Activated CD4-positive, alpha-beta T cell treated with anti-CD3 and anti-CD28 coated beads for 36 hours (primary cell): ENCODE measurements at regions of chr13 and their contacts with region 1.

Region 1: GRCh38 chr13:19587635-19588300 is 26.4 kb upstream of the TPTE2 start:
- DNase-seq: peak; percentile 46
- ATAC-seq: peak; percentile 67
- H3K4me3 Mint-ChIP-seq: peak overlapping the region; percentile 78
- H3K27ac Mint-ChIP-seq: peak overlapping the region; percentile 93
- H3K4me1 Mint-ChIP-seq: peaks cover 14% of the 10 kb centered on the region
- H3K27me3 Mint-ChIP-seq: no peaks in the 10 kb centered on the region

Region 2: DNA sequence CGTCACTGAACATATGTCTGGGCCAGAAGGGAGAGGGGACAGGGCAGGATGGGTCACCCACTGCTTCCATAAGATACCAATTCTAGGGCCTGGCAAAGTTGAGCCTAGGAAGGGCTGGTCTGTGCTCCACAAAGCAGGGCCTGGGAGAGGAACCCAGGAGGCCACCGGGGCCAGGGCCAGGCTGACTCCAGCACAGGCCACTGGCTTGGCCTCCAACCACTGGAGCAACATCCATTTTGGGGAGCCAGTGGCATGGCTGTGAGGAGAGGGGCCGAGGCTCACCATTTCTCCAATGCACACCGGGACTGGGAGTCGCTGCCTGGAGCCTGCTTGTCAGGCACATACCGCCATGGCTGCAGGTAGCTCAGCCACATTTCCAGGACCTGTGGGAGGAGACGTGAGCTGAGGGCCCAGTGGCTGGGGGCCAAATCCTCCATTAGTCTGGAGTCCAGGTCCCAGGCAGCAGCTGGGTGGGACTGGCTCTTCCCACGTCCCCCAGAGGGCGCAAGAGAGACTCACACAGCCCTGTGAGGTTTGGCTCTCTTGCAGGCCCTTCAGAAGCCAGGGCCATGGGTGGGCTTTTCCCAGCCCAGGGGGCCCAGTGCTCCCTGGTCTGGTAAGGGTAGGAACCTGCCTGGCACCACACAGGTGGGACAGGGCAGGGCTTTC is 433.9 kb before region 1 on chr13:
- CTCF ChIA-PET with region 1: no interaction called
- POLR2A ChIA-PET with region 1: no interaction called
- intact Hi-C with region 1: loop called in 1 of 2 experiments (anchors 10 kb)
- DNase-seq: peak; percentile 58
- ATAC-seq: peak; percentile 57
- H3K4me3 Mint-ChIP-seq: no peak overlapping the region
- H3K27ac Mint-ChIP-seq: no peak overlapping the region
- H3K4me1 Mint-ChIP-seq: no peaks in the 10 kb centered on the region
- H3K27me3 Mint-ChIP-seq: peaks cover 2% of the 10 kb centered on the region

Region 3: GRCh38 chr13:19567820-19568534 is 19.8 kb before region 1 on chr13:
- CTCF ChIA-PET with region 1: interaction called, 7 read pairs
- POLR2A ChIA-PET with region 1: no interaction called
- intact Hi-C with region 1: loop called in 1 of 2 experiments (anchors 2 kb)
- DNase-seq: no peak
- ATAC-seq: no peak
- H3K4me3 Mint-ChIP-seq: no peak overlapping the region
- H3K27ac Mint-ChIP-seq: no peak overlapping the region
- H3K4me1 Mint-ChIP-seq: peaks cover 3% of the 10 kb centered on the region
- H3K27me3 Mint-ChIP-seq: peaks cover 2% of the 10 kb centered on the region

Region 4: GRCh38 chr13:19633479-19634255 is 45.9 kb after region 1 on chr13 and contains the start of gene MPHOSPH8:
- CTCF ChIA-PET with region 1: interaction called, 4 read pairs
- POLR2A ChIA-PET with region 1: no interaction called
- intact Hi-C with region 1: loop called in 1 of 2 experiments (anchors 1 kb)
- DNase-seq: peak; percentile 96
- ATAC-seq: peak; percentile 98
- H3K4me3 Mint-ChIP-seq: peak within 1 kb of the TSS; percentile 99
- H3K27ac Mint-ChIP-seq: peak within 1 kb of the TSS; percentile 99
- H3K4me1 Mint-ChIP-seq: peaks cover 27% of the 10 kb centered on the region
- H3K27me3 Mint-ChIP-seq: no peaks in the 10 kb centered on the region
- total RNA-seq, gene MPHOSPH8: 39.1 to 39.8 TPM

Region 5: GRCh38 chr13:19782049-19782726 is 194.4 kb after region 1 on chr13:
- CTCF ChIA-PET with region 1: no interaction called
- POLR2A ChIA-PET with region 1: no interaction called
- intact Hi-C with region 1: loop called in 1 of 2 experiments (anchors 2 kb)
- DNase-seq: peak; percentile 75
- ATAC-seq: peak; percentile 45
- H3K4me3 Mint-ChIP-seq: peak overlapping the region; percentile 94
- H3K27ac Mint-ChIP-seq: peak overlapping the region; percentile 98
- H3K4me1 Mint-ChIP-seq: peaks cover 5% of the 10 kb centered on the region
- H3K27me3 Mint-ChIP-seq: no peaks in the 10 kb centered on the region